OCI-LY7 (cell line): ENCODE measurements at regions of chr12 and their contacts with region 1.

Region 1: GRCh38 chr12:75759842-75760572 is 248.6 kb upstream of the KRR1 start:
- DNase-seq: no peak
- H3K4me3 ChIP-seq: peak overlapping the region; percentile 50
- H3K27ac ChIP-seq: peak overlapping the region; percentile 91
- H3K4me1 ChIP-seq: peaks cover 62% of the 10 kb centered on the region
- CTCF ChIP-seq: no peak

Region 2: DNA sequence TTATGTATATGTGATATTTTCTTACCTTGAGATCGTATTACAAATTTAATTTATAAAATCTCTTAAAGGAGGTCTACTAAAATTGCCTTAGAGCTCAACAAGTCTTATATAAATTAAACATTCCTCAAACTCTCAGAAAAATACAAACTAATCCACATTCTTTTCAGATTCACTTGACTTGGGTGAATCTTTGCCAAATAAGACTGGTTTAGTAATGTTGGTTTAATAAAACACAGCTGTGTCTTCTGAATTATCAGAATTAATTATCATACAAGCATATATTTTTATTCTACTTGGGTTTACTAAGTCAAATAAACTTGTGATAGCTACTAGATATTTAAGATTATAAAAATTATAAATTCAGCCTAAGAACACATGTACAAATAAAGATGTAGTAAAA is 355.8 kb before region 1 on chr12:
- CTCF ChIA-PET with region 1: no interaction called
- POLR2A ChIA-PET with region 1: no interaction called
- intact Hi-C with region 1: no loop called
- DNase-seq: no peak
- H3K4me3 ChIP-seq: no peak overlapping the region
- H3K27ac ChIP-seq: no peak overlapping the region
- H3K4me1 ChIP-seq: no peaks in the 10 kb centered on the region
- CTCF ChIP-seq: no peak

Region 3: GRCh38 chr12:75960086-75960910 is 200.3 kb after region 1 on chr12:
- CTCF ChIA-PET with region 1: no interaction called
- POLR2A ChIA-PET with region 1: interaction called, 4 read pairs
- intact Hi-C with region 1: loop called (anchors 2 kb)
- DNase-seq: peak; percentile 93
- H3K4me3 ChIP-seq: peak overlapping the region; percentile 6
- H3K27ac ChIP-seq: peak overlapping the region; percentile 87
- H3K4me1 ChIP-seq: peaks cover 62% of the 10 kb centered on the region
- CTCF ChIP-seq: no peak

Region 4: GRCh38 chr12:75970310-75970709 is 210.3 kb after region 1 on chr12:
- CTCF ChIA-PET with region 1: no interaction called
- POLR2A ChIA-PET with region 1: no interaction called
- intact Hi-C with region 1: no loop called
- DNase-seq: no peak
- H3K4me3 ChIP-seq: no peak overlapping the region
- H3K27ac ChIP-seq: no peak overlapping the region
- H3K4me1 ChIP-seq: peaks cover 14% of the 10 kb centered on the region
- CTCF ChIP-seq: no peak